GM12878 (cell line): ENCODE measurements at regions of chr4 and their contacts with region 1.

Region 1: GRCh38 chr4:180028682-180029081 is 2214.5 kb upstream of the TENM3 start:
- DNase-seq: peak; percentile 12
- ATAC-seq: peak; percentile 90
- H3K4me3 ChIP-seq: no peak overlapping the region
- H3K27ac ChIP-seq: no peak overlapping the region
- H3K4me1 ChIP-seq: no peaks in the 10 kb centered on the region
- H3K27me3 ChIP-seq: no peaks in the 10 kb centered on the region; a peak in 2 of 4 replicates
- CTCF ChIP-seq: peak; percentile 54 to 56 (median 55); a peak in 4 of 6 replicates
- EP300 ChIP-seq: no peak
- POLR2A ChIP-seq: no peak
- RAD21 ChIP-seq: peak; percentile 60

Region 2: DNA sequence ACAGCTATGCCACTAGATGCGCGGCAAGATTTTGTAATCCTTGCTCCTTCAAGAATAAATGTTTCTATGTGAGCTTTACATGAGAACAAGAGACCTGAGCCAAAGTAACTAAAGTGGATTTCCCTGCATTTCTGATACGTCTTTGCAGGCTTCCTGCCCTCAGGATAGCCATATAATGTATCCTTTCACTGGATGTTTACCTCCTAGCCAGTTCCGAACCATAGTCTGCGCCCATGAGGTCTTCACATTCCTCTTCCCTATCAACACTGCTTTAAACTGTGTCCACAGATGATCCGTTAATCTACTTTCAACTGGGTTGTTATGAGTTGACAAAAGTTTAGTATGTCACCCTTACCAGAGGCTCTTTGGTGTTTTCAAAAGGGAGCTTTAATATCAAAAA is 697.3 kb before region 1 on chr4:
- CTCF ChIA-PET with region 1: no interaction called
- POLR2A ChIA-PET with region 1: no interaction called
- RAD21 ChIA-PET with region 1: no interaction called
- SMC1A ChIA-PET with region 1: no interaction called
- in situ Hi-C with region 1: no loop called
- intact Hi-C with region 1: loop called (anchors 5 kb)
- DNase-seq: no peak
- ATAC-seq: no peak
- H3K4me3 ChIP-seq: no peak overlapping the region
- H3K27ac ChIP-seq: no peak overlapping the region
- H3K4me1 ChIP-seq: no peaks in the 10 kb centered on the region
- H3K27me3 ChIP-seq: no peaks in the 10 kb centered on the region
- CTCF ChIP-seq: no peak
- EP300 ChIP-seq: no peak
- POLR2A ChIP-seq: no peak
- RAD21 ChIP-seq: no peak

Region 3: GRCh38 chr4:179738822-179739221 is 289.9 kb before region 1 on chr4:
- CTCF ChIA-PET with region 1: no interaction called
- POLR2A ChIA-PET with region 1: no interaction called
- RAD21 ChIA-PET with region 1: no interaction called
- SMC1A ChIA-PET with region 1: no interaction called
- in situ Hi-C with region 1: no loop called
- intact Hi-C with region 1: no loop called
- DNase-seq: no peak
- ATAC-seq: peak; percentile 59
- H3K4me3 ChIP-seq: no peak overlapping the region
- H3K27ac ChIP-seq: no peak overlapping the region
- H3K4me1 ChIP-seq: no peaks in the 10 kb centered on the region
- H3K27me3 ChIP-seq: no peaks in the 10 kb centered on the region
- CTCF ChIP-seq: no peak
- EP300 ChIP-seq: no peak
- POLR2A ChIP-seq: no peak
- RAD21 ChIP-seq: no peak

Region 4: GRCh38 chr4:179867300-179867878 is 161.3 kb before region 1 on chr4:
- CTCF ChIA-PET with region 1: interaction called, 52 read pairs
- POLR2A ChIA-PET with region 1: no interaction called
- RAD21 ChIA-PET with region 1: interaction called, 30 read pairs
- SMC1A ChIA-PET with region 1: interaction called, 26 read pairs
- in situ Hi-C with region 1: loop called (anchors 10 kb)
- intact Hi-C with region 1: loop called (anchors 1 kb)
- DNase-seq: peak; percentile 16
- ATAC-seq: peak; percentile 99
- H3K4me3 ChIP-seq: no peak overlapping the region
- H3K27ac ChIP-seq: no peak overlapping the region
- H3K4me1 ChIP-seq: no peaks in the 10 kb centered on the region
- H3K27me3 ChIP-seq: no peaks in the 10 kb centered on the region
- CTCF ChIP-seq: peak; percentile 80 to 93 (median 91)
- EP300 ChIP-seq: no peak
- POLR2A ChIP-seq: no peak
- RAD21 ChIP-seq: peak; percentile 88